ENCODE measurements at regions of chr1 and their contacts with region 1.

Region 1: GRCh38 chr1:183956559-183957188 is 80.9 kb downstream of the COLGALT2 start:
- DNase-seq: peak; percentile 94
- ATAC-seq: peak; percentile 99
- H3K4me3 ChIP-seq: peak overlapping the region; percentile 5; the same call in 1 of the 2 replicates
- H3K27ac ChIP-seq: 0 out of 2 replicates have a peak overlapping the region, but pooled peaks have one; percentile 20
- H3K4me1 ChIP-seq: peaks cover 16% of the 10 kb centered on the region
- H3K27me3 ChIP-seq: no peaks in the 10 kb centered on the region
- CTCF ChIP-seq: peak; percentile 33 to 36 (median 35); a peak in 3 of 6 replicates
- EP300 ChIP-seq: peak; percentile 90 to 95
- POLR2A ChIP-seq: no peak
- RAD21 ChIP-seq: peak; percentile 61

Region 2: DNA sequence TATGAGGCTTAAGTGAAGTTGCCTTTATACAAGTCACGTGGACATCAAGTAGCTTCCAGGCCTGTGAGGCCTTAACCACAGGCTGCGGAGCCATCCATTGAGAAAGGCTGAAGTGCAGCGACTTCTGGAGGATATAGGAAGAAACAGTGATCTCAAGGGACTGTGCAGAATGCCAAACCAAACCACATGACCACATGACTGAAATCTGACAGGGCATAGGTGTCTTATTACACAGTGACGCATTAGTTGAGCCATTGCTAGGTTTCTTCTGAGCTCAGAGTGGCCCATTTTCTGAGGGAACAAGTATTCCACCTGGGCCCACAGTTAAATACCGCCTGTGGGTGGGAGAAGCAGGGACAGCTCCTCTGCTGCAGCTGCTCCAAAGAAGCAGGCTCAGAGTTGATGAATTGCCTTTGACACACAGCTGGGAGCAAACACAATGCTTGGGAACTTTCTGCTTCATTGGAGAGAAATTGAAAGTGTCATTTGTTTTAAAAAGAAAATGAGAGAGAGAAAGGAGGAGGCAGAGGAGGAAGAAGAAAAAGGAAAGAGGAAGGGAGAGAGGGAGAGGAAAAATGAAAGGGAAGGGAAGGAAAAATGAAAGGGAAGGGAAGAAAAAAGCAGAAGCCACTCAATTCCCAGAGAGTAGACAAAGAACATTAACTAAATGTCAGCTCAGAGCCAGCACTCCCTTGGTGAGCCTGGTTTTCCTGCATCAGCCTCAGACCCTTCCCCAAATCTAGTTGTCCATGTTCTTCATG is 13.6 kb before region 1 on chr1:
- CTCF ChIA-PET with region 1: interaction called, 7 read pairs
- POLR2A ChIA-PET with region 1: interaction called, 6 read pairs
- RAD21 ChIA-PET with region 1: interaction called, 5 read pairs
- SMC1A ChIA-PET with region 1: interaction called, 27 read pairs
- in situ Hi-C with region 1: no loop called
- intact Hi-C with region 1: no loop called
- DNase-seq: peak; percentile 34
- ATAC-seq: peak; percentile 98
- H3K4me3 ChIP-seq: no peak overlapping the region
- H3K27ac ChIP-seq: no peak overlapping the region
- H3K4me1 ChIP-seq: 0 out of 2 replicates have a peak, but pooled peaks cover 3% of the 10 kb centered on the region
- H3K27me3 ChIP-seq: no peaks in the 10 kb centered on the region; a peak in 1 of 4 replicates
- CTCF ChIP-seq: no peak
- EP300 ChIP-seq: no peak
- POLR2A ChIP-seq: no peak
- RAD21 ChIP-seq: no peak

Region 3: GRCh38 chr1:183989078-183989577 is 32.5 kb after region 1 on chr1:
- CTCF ChIA-PET with region 1: interaction called, 4 read pairs
- POLR2A ChIA-PET with region 1: interaction called, 8 read pairs
- RAD21 ChIA-PET with region 1: interaction called, 8 read pairs
- SMC1A ChIA-PET with region 1: interaction called, 16 read pairs
- in situ Hi-C with region 1: no loop called
- intact Hi-C with region 1: loop called (anchors 1 kb)
- DNase-seq: peak; percentile 83
- ATAC-seq: peak; percentile 98
- H3K4me3 ChIP-seq: no peak overlapping the region
- H3K27ac ChIP-seq: no peak overlapping the region
- H3K4me1 ChIP-seq: peaks cover 13% of the 10 kb centered on the region
- H3K27me3 ChIP-seq: peaks cover 0 to 11% of the 10 kb centered on the region in 2 experiments; a peak in 1 of 4 replicates
- CTCF ChIP-seq: no peak
- EP300 ChIP-seq: peak in 1 of 2 experiments; percentile 32; a peak in 1 of 4 replicates
- POLR2A ChIP-seq: no peak
- RAD21 ChIP-seq: no peak

Region 4: DNA sequence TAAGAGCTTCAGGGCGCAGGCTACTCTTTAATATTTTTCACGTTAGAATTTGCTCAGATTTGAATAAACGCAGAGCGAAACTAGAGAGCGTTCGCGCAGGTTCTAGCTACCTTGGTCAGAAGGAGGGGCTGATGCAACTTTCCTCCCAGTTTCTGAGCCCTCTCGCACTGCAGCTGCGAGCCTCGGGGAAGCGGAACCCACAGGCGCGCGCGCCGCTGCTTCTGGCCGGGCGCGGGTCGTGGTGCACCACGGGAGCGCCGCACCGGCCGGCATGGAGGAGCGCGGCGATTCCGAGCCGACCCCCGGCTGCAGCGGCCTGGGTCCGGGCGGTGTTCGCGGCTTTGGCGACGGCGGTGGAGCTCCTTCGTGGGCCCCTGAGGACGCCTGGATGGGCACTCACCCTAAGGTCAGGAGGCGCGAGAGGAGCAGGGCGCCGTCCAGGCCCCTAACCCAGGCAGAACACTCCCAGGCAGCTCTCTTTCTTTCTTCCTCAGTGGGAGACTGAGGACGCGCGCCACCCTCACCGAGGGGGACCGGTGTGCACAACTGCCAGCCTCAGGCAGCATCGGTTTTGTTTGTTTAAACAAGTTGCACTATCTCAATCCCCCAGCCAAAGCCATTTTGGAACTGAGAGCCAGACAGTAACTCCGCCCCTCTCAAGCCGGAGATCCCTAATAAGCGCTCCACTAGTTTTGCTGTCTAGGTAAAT is 95.0 kb after region 1 on chr1 and contains the start of gene TSEN15:
- CTCF ChIA-PET with region 1: interaction called, 4 read pairs
- POLR2A ChIA-PET with region 1: no interaction called
- RAD21 ChIA-PET with region 1: interaction called, 14 read pairs
- SMC1A ChIA-PET with region 1: interaction called, 3 read pairs
- in situ Hi-C with region 1: no loop called
- intact Hi-C with region 1: loop called (anchors 1 kb)
- DNase-seq: peak; percentile 40
- ATAC-seq: peak; percentile 97
- H3K4me3 ChIP-seq: peak within 1 kb of the TSS; percentile 83
- H3K27ac ChIP-seq: peak within 1 kb of the TSS; percentile 78
- H3K4me1 ChIP-seq: peaks cover 7% of the 10 kb centered on the region; the same call in 1 of the 2 replicates
- H3K27me3 ChIP-seq: no peaks in the 10 kb centered on the region; a peak in 1 of 4 replicates
- CTCF ChIP-seq: no peak
- EP300 ChIP-seq: no peak
- POLR2A ChIP-seq: peak; percentile 98
- RAD21 ChIP-seq: no peak
- polyA plus RNA-seq, gene TSEN15: 21.1 to 35.1 TPM

Region 5: GRCh38 chr1:184296466-184297243 is 340.0 kb after region 1 on chr1:
- CTCF ChIA-PET with region 1: no interaction called
- POLR2A ChIA-PET with region 1: no interaction called
- RAD21 ChIA-PET with region 1: no interaction called
- SMC1A ChIA-PET with region 1: no interaction called
- in situ Hi-C with region 1: no loop called
- intact Hi-C with region 1: no loop called
- DNase-seq: no peak
- ATAC-seq: no peak
- H3K4me3 ChIP-seq: no peak overlapping the region
- H3K27ac ChIP-seq: no peak overlapping the region
- H3K4me1 ChIP-seq: no peaks in the 10 kb centered on the region
- H3K27me3 ChIP-seq: no peaks in the 10 kb centered on the region
- CTCF ChIP-seq: no peak
- EP300 ChIP-seq: no peak
- POLR2A ChIP-seq: no peak
- RAD21 ChIP-seq: no peak

Measured in GM12878 (cell line).